ENCODE measurements at regions of chr7 and their contacts with region 1.

Region 1: GRCh38 chr7:121395961-121396757 is at the start of gene FAM3C:
- DNase-seq: peak; percentile 76
- ATAC-seq: peak; percentile 91
- H3K4me3 Mint-ChIP-seq: peak within 1 kb of the TSS; percentile 80
- H3K27ac Mint-ChIP-seq: peak within 1 kb of the TSS; percentile 85
- H3K4me1 Mint-ChIP-seq: peaks cover 34% of the 10 kb centered on the region
- H3K27me3 Mint-ChIP-seq: no peaks in the 10 kb centered on the region
- total RNA-seq, gene FAM3C: 18.0 to 18.4 TPM

Region 2: DNA sequence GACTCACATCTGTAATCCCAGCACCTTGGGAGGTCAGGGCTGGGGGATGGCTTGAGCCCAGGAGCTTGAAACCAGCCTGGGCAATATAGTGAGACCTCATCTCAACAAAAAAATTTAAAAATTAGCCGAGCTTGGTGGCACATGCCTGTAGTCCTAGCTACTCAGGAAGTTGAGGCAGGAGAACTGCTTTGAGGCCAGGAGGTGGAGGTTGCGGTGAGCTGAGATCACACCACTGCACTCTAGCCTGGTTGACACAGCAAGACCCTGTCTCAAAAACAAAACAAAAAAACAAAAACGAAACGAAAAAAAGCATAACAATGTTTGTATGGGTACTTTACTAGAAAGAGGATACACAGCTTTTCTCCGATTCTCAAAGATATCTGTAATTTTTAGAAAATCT is 35.6 kb before region 1 on chr7:
- CTCF ChIA-PET with region 1: interaction called, 14 read pairs
- POLR2A ChIA-PET with region 1: interaction called, 4 read pairs
- DNase-seq: peak; percentile 36
- ATAC-seq: peak; percentile 58
- H3K4me3 Mint-ChIP-seq: no peak overlapping the region
- H3K27ac Mint-ChIP-seq: peak overlapping the region; percentile 30
- H3K4me1 Mint-ChIP-seq: peaks cover 12% of the 10 kb centered on the region
- H3K27me3 Mint-ChIP-seq: no peaks in the 10 kb centered on the region

Region 3: DNA sequence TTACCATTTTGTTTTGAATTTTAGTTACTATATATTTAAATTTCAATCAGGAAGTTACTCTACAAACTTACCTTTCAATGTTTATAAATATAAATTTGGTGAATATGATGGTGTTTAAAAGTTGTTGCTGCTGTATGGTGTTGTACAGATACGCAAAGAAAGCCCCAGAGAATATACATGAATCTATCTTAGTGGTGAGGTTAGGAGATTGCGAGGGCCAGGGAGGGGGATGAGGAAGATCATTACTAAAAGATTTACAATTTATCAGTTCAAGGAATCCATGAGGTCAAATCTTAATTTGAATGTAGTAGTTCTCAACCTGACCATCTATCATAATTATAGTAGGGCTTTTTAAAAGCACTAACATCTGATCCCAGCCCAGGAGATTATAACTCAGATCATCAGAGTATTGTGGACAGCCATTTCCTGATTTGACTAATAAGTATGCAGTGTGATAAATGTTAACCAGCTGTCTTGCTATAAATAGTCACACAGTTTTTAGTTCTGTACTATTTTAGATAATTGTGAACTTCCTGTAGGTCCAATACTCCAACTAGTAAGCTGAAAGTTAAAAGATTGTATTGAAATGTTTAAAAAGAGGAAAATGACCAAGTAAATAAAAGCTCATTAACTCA is 23.7 kb before region 1 on chr7:
- CTCF ChIA-PET with region 1: interaction called, 81 read pairs
- POLR2A ChIA-PET with region 1: interaction called, 6 read pairs
- DNase-seq: no peak
- ATAC-seq: peak; percentile 71
- H3K4me3 Mint-ChIP-seq: peak overlapping the region; percentile 3
- H3K27ac Mint-ChIP-seq: peak overlapping the region; percentile 69
- H3K4me1 Mint-ChIP-seq: peaks cover 40% of the 10 kb centered on the region
- H3K27me3 Mint-ChIP-seq: no peaks in the 10 kb centered on the region

Region 4: DNA sequence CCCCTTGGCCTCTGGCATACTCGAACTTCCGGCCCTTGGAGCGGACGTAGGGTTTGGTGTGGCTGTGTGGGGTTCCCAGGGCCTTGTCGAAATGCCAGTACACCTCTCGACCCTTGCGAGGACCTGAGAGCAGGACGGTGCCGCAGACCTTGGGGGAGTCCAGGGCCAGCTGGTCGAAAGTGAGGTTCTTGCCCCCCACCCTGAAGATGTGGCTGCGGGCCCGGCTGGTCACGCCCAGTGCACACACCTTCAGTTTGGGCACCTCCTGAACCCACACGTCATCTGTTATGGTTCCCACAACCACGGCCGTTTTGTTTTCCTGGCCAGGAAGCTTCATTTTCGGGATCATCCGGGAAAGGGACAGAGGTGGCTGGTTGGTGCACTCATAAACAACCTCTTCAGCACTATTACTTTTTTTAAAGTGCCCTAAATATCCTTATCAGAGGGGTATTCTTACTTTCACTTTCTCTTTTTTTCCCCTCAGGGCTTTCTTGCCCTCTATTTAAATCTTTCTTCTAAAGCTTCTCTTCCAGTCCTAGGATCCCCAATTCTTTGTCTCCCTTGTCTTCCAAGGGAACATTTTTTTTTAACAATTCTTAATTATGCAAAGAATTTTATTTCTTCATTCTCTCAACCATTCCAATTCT is 44.8 kb after region 1 on chr7:
- CTCF ChIA-PET with region 1: interaction called, 13 read pairs
- POLR2A ChIA-PET with region 1: interaction called, 6 read pairs
- DNase-seq: no peak
- ATAC-seq: no peak
- H3K4me3 Mint-ChIP-seq: peak overlapping the region; percentile 55
- H3K27ac Mint-ChIP-seq: peak overlapping the region; percentile 53
- H3K4me1 Mint-ChIP-seq: peaks cover 35% of the 10 kb centered on the region
- H3K27me3 Mint-ChIP-seq: no peaks in the 10 kb centered on the region

Region 5: DNA sequence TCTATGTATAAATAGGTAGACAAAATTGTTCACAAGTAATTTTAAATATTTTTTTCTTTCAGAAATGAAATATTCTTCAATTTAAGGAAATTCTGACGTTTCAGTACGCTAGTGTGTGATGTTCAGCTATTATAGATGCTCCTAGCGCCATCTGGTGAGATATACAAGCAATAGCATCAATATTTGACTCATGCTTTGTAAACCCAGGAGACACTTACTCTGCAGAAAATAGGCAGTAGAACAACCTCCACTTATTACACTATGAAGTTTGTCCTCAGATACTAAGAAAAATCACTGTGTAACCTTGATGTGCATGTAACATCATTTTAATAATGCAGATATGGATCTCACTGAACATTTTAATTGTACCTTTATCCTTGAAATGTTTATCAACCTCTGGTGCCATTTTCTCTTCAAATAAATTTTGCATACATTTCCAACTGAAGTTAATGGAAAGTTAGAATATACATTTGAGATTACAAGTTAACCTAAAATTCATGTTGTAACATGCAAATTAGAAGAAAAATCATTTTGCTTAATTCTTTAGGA is 151.5 kb after region 1 on chr7:
- CTCF ChIA-PET with region 1: interaction called, 35 read pairs
- POLR2A ChIA-PET with region 1: interaction called, 3 read pairs
- DNase-seq: peak; percentile 33
- ATAC-seq: peak; percentile 82
- H3K4me3 Mint-ChIP-seq: no peak overlapping the region
- H3K27ac Mint-ChIP-seq: no peak overlapping the region
- H3K4me1 Mint-ChIP-seq: peaks cover 30% of the 10 kb centered on the region
- H3K27me3 Mint-ChIP-seq: no peaks in the 10 kb centered on the region